ENCODE measurements at regions of chr2 and their contacts with region 1.

Region 1: GRCh38 chr2:85066874-85067351 is 66.3 kb upstream of the TCF7L1 start:
- DNase-seq: peak; percentile 62
- CTCF ChIP-seq: peak; percentile 44

Region 2: DNA sequence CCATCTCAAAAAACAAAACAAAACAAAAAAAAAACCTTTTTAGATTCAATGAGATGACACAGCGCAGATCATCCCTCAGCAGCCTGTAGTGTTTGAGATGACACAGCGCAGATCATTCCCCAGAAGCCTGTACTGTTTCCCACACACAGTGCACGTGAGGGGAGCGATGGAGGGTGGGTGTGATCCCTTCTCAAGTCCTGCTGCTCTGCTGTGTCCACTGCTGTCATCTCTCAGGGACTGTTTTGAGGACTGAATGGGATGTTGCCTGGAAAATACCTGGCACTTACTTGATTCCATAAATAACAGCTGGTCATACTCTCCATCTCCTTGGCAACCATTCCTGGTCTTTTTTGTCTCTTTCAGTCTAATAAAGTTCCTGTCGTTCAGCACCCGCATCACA is 235.2 kb after region 1 on chr2:
- CTCF ChIA-PET with region 1: interaction called, 29 read pairs
- POLR2A ChIA-PET with region 1: no interaction called
- DNase-seq: no peak
- CTCF ChIP-seq: no peak

Measured in GM10248 (cell line).